ENCODE measurements at regions of chr19 and their contacts with region 1.

Region 1: DNA sequence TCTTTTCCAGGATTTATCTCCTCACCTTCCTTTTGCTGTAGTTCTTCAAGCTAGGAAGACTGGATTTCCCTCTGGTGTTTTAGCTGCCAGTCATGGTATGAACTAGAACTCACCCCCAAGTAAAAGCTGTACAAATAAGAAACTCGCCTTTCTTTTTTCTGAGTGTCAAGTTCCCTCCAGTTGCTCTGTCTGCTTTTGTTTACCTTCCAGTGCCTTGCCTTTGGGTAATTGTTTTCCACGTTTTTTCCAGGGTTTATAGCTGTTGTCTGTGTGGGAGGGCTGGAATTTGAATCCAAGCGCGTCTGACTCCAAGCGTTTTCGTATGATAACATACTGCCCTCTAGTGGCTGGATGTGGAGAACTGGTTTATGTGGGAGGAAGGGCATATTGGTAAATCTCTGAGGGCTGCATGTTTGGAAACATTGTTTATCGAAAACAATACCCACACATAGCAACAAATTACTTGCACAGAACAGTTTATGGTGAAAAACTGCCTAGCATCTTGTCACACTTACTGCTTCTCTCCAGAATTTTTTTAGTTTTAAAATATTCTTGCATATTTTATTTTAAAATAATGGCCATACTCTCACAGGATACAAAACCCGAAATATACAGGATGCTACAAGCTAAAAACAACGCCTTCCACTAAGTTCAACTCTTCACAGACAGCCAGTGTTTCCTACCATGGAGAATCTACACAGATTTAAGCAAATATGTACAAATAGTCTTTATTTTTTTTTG is 19.2 kb downstream of the RCN3 start:
- DNase-seq: peak; percentile 47 to 74
- H3K4me3 ChIP-seq: peak overlapping the region in 1 of 4 experiments; percentile 27; a peak in 1 of 8 replicates
- H3K27ac ChIP-seq: no peak overlapping the region
- H3K4me1 ChIP-seq: no peaks in the 10 kb centered on the region
- H3K27me3 ChIP-seq: no peaks in the 10 kb centered on the region
- CTCF ChIP-seq: peak; percentile 24 to 90 (median 84)
- EP300 ChIP-seq: no peak
- POLR2A ChIP-seq: no peak
- RAD21 ChIP-seq: peak; percentile 88 to 91

Region 2: GRCh38 chr19:49473868-49474544 is 73.0 kb before region 1 on chr19 and contains the start of gene FLT3LG:
- CTCF ChIA-PET with region 1: interaction called, 15 read pairs
- POLR2A ChIA-PET with region 1: no interaction called
- DNase-seq: peak in 1 of 2 experiments; percentile 90
- H3K4me3 ChIP-seq: peak within 1 kb of the TSS in 2 of 4 experiments; percentile 10 to 58; a peak in 3 of 8 replicates
- H3K27ac ChIP-seq: no peak within 1 kb of the TSS
- H3K4me1 ChIP-seq: peaks cover 0 to 5% (median under 1%) of the 10 kb centered on the region in 4 experiments; a peak in 3 of 7 replicates
- H3K27me3 ChIP-seq: peaks cover 0 to 5% (median 0%) of the 10 kb centered on the region in 4 experiments; a peak in 4 of 7 replicates
- CTCF ChIP-seq: peak; percentile 86 to 92 (median 88)
- EP300 ChIP-seq: no peak
- POLR2A ChIP-seq: no peak
- RAD21 ChIP-seq: peak; percentile 36 to 49; a peak in 3 of 4 replicates
- total RNA-seq, gene FLT3LG: 1.6 and 2.6 TPM in 2 replicates

Region 3: DNA sequence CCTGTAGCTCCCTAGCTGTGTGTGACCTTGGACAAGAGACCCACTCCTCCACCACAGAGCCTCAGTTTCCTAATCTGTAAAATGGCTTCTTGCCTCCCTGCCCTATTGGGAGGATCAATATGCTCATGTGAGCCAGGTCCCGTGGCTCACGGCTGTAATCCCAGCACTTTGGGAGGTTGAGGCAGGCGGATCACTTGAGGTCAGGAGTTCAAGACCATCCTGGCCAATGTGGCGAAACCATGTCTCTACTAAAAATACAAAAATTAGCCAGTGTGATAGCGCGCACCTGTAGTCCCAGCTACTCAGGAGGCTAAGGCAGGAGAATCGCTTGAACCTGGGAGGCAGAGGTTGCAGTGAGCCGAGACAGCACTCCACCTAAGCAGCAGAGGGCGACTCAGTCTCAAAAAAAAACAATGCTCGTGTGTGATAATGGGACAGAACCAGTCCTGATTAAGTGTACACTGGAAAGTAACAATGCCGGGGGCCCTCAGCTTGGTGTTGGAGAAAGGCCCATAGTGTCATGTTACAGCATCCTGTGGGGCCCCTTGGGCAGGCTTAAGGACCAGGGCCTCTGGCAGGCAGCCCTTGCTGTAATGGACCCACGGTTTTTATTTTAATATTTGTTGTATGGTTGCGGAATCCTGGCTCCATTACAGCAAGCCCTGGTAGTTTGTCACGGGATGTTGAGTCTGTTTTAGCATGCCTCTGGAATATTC is 44.0 kb before region 1 on chr19:
- CTCF ChIA-PET with region 1: interaction called, 8 read pairs
- POLR2A ChIA-PET with region 1: interaction called, 11 read pairs
- DNase-seq: no peak
- H3K4me3 ChIP-seq: no peak overlapping the region
- H3K27ac ChIP-seq: no peak overlapping the region
- H3K4me1 ChIP-seq: peaks cover 0 to 22% (median 17%) of the 10 kb centered on the region in 4 experiments; a peak in 6 of 7 replicates
- H3K27me3 ChIP-seq: no peaks in the 10 kb centered on the region
- CTCF ChIP-seq: peak; percentile 40 to 45 (median 41); a peak in 3 of 4 replicates
- EP300 ChIP-seq: no peak
- POLR2A ChIP-seq: no peak
- RAD21 ChIP-seq: peak; percentile 55 to 59

Region 4: GRCh38 chr19:49512970-49513745 is 33.8 kb before region 1 on chr19:
- CTCF ChIA-PET with region 1: interaction called, 12 read pairs
- POLR2A ChIA-PET with region 1: interaction called, 18 read pairs
- DNase-seq: peak in 1 of 2 experiments; percentile 81
- H3K4me3 ChIP-seq: peak overlapping the region; percentile 66 to 93 (median 75)
- H3K27ac ChIP-seq: peak overlapping the region; percentile 55; the same call in 1 of the 2 replicates
- H3K4me1 ChIP-seq: peaks cover 0 to 9% (median 8%) of the 10 kb centered on the region in 4 experiments; a peak in 5 of 7 replicates
- H3K27me3 ChIP-seq: no peaks in the 10 kb centered on the region; a peak in 1 of 7 replicates
- CTCF ChIP-seq: no peak
- EP300 ChIP-seq: no peak
- POLR2A ChIP-seq: peak in 1 of 2 experiments; percentile 75; a peak in 2 of 3 replicates
- RAD21 ChIP-seq: no peak

Region 5: GRCh38 chr19:49520705-49521319 is 26.2 kb before region 1 on chr19:
- CTCF ChIA-PET with region 1: interaction called, 10 read pairs
- POLR2A ChIA-PET with region 1: interaction called, 4 read pairs
- DNase-seq: no peak
- H3K4me3 ChIP-seq: no peak overlapping the region
- H3K27ac ChIP-seq: no peak overlapping the region
- H3K4me1 ChIP-seq: no peaks in the 10 kb centered on the region; a peak in 1 of 7 replicates
- H3K27me3 ChIP-seq: no peaks in the 10 kb centered on the region
- CTCF ChIP-seq: no peak
- EP300 ChIP-seq: no peak
- POLR2A ChIP-seq: no peak
- RAD21 ChIP-seq: no peak

Region 6: DNA sequence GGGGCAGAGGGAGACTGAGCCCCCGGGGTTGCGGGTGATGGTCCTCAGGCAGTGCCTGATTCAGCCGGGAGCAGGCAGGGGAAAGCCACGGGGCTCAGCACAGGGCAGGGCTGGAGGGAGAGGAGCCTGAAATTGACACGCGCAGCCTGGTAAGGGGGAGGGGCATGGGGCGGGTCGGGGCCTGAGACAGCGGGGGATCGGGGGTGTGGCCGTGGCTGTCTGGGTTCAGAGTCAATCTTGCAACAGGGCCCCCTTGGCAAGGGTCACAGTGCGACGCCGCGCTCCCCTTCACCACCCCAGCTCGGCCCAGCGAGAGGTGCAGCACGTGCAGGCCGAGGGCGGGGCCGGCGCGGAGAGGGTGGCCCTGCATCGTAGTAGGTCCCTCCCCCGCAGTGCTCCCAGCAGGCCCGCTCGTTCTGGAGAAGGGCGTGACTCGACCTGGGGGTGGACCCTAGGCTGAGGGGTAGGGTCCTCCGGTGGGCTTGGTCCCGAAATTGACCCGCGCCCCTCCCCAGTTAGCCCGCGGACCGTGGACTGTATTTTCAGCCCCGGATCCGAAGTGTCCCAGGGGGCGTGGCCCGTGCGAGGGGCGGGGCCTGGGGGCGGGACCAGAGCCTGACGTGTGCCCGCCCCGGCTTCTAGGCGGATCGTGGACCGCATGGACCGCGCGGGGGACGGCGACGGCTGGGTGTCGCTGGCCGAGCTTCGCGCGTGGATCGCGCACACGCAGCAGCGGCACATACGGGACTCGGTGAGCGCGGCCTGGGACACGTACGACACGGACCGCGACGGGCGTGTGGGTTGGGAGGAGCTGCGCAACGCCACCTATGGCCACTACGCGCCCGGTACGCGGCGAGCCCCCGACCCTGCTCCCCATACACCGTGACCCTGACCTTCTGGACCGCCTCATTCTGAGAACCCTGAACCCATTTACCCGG is 13.2 kb before region 1 on chr19:
- CTCF ChIA-PET with region 1: interaction called, 54 read pairs
- POLR2A ChIA-PET with region 1: interaction called, 17 read pairs
- DNase-seq: peak in 1 of 2 experiments; percentile 96
- H3K4me3 ChIP-seq: peak overlapping the region; percentile 60 to 81 (median 72)
- H3K27ac ChIP-seq: no peak overlapping the region
- H3K4me1 ChIP-seq: peaks cover 0 to 9% (median 1%) of the 10 kb centered on the region in 4 experiments; a peak in 5 of 7 replicates
- H3K27me3 ChIP-seq: no peaks in the 10 kb centered on the region; a peak in 1 of 7 replicates
- CTCF ChIP-seq: peak; percentile 22 to 76 (median 53)
- EP300 ChIP-seq: no peak
- POLR2A ChIP-seq: no peak
- RAD21 ChIP-seq: no peak

Region 7: DNA sequence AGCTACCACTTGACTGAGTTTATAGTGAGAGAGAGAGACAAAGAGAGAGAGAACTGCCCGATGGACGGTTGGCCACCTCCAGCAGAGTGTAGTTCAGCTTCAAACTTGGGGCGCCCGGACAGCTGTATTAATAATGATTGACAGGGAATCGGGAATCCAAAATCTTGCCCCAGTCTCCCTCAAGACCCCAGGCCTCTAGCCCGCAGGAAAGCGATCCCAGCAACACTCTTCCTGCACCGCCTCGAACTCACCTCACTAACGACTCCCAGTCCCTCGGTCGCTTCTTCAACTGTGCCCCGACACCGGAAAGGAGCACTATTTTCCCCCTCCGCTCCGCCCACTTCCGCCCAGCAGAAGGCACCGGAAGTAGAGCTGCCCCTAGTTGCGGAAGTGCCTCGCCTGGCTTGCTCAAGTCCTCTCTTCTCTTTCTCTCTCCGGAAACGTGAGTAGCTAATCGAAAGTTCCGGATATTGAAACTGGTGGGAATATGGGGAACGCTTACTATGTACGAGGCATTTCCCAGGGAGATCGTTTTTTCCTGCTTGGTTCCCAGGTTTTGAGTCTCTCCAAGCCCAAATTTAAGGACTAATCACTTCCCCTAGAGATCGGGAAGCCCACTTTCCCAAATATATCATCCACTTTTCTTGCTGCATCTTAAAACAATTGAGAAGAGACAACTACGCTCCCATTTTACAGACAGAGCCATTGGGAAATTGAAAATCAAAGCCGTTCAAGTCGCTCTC is 33.4 kb after region 1 on chr19 and contains the start of gene NOSIP:
- CTCF ChIA-PET with region 1: interaction called, 240 read pairs
- POLR2A ChIA-PET with region 1: interaction called, 15 read pairs
- DNase-seq: peak; percentile 89 to 95
- H3K4me3 ChIP-seq: peak within 1 kb of the TSS; percentile 87 to 99 (median 92)
- H3K27ac ChIP-seq: peak within 1 kb of the TSS; percentile 51
- H3K4me1 ChIP-seq: peaks cover 2 to 19% (median 8%) of the 10 kb centered on the region in 4 experiments
- H3K27me3 ChIP-seq: no peaks in the 10 kb centered on the region
- CTCF ChIP-seq: no peak
- EP300 ChIP-seq: 0 out of 3 replicates have a peak, but pooled peaks of 1 of the 2 experiments have one; percentile 47
- POLR2A ChIP-seq: peak; percentile 95 to 99
- RAD21 ChIP-seq: no peak
- total RNA-seq, gene NOSIP: 85.1 and 93.8 TPM in 2 replicates

Measured in H1 (cell line).